CD4-positive, alpha-beta T cell (primary cell): ENCODE measurements at regions of chr1 and their contacts with region 1.

Region 1: DNA sequence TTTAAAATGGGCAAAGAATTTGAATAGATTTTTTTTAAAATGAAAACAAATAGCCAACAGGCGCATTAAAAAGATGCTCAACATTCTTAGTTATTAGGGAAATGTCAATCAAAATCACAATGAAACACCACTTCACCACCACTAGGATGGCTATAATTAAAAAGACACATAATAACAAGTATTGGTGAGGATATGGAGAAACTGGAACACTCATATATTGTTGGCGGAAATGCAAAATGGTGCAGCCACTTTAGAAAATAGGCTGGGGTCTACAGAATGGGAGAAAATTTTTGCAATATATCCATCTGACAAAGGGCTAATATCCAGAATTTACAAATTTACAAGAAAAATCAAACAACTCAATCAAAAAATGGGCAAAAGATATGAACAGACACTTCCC is 107.8 kb upstream of the FOXD3 start:
- DNase-seq: no peak
- ATAC-seq: no peak
- H3K4me3 ChIP-seq: no peak overlapping the region
- H3K4me3 Mint-ChIP-seq: no peak overlapping the region
- H3K27ac ChIP-seq: no peak overlapping the region
- H3K27ac Mint-ChIP-seq: no peak overlapping the region
- H3K4me1 ChIP-seq: no peaks in the 10 kb centered on the region
- H3K4me1 Mint-ChIP-seq: no peaks in the 10 kb centered on the region
- H3K27me3 ChIP-seq: peaks cover 0 to 4% of the 10 kb centered on the region in 2 experiments
- H3K27me3 Mint-ChIP-seq: peaks cover 17% of the 10 kb centered on the region
- CTCF ChIP-seq: no peak

Region 2: GRCh38 chr1:63276624-63277023 is 62.1 kb after region 1 on chr1:
- CTCF ChIA-PET with region 1: no interaction called
- POLR2A ChIA-PET with region 1: no interaction called
- intact Hi-C with region 1: loop called in 1 of 2 experiments (anchors 10 kb)
- DNase-seq: no peak
- ATAC-seq: no peak
- H3K4me3 ChIP-seq: no peak overlapping the region
- H3K4me3 Mint-ChIP-seq: no peak overlapping the region
- H3K27ac ChIP-seq: no peak overlapping the region
- H3K27ac Mint-ChIP-seq: no peak overlapping the region
- H3K4me1 ChIP-seq: no peaks in the 10 kb centered on the region
- H3K4me1 Mint-ChIP-seq: no peaks in the 10 kb centered on the region
- H3K27me3 ChIP-seq: no peaks in the 10 kb centered on the region
- H3K27me3 Mint-ChIP-seq: peaks cover 26% of the 10 kb centered on the region
- CTCF ChIP-seq: no peak